ENCODE measurements at regions of chr7 and their contacts with region 1.

Region 1: DNA sequence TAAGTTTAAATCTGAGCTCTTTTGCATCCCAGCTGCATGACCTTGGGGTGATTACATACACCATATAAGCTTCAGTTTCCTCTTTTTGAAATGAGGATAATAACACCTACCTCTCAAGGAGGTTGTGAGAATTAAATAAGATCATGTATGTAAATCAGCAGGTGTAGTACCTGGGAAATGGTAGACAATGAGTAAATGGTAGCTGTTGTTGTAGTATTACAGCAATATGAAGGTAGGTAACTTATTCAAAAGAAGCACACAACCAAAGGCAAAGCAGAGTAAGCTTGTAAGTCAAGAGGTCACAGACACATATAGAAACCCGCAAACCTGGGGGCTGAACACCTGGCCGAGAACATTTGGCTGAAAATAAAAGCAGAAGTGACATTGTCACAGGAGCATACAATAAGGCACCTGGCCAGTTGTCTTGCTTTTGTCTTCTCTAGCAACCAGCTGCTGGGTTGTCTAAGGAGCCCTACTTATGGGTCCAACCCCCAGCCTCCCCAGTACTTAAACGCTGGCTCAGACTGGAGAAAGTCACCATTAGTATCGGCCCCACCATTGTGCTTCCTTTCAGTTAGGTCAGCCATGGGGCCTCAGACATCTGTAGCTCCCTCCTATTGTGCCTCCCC is 203.6 kb upstream of the MKLN1 start:
- DNase-seq: peak; percentile 96
- H3K4me3 ChIP-seq: peak overlapping the region; percentile 38
- H3K27ac ChIP-seq: peak overlapping the region; percentile 100
- H3K4me1 ChIP-seq: peaks cover 51% of the 10 kb centered on the region
- CTCF ChIP-seq: no peak

Region 2: DNA sequence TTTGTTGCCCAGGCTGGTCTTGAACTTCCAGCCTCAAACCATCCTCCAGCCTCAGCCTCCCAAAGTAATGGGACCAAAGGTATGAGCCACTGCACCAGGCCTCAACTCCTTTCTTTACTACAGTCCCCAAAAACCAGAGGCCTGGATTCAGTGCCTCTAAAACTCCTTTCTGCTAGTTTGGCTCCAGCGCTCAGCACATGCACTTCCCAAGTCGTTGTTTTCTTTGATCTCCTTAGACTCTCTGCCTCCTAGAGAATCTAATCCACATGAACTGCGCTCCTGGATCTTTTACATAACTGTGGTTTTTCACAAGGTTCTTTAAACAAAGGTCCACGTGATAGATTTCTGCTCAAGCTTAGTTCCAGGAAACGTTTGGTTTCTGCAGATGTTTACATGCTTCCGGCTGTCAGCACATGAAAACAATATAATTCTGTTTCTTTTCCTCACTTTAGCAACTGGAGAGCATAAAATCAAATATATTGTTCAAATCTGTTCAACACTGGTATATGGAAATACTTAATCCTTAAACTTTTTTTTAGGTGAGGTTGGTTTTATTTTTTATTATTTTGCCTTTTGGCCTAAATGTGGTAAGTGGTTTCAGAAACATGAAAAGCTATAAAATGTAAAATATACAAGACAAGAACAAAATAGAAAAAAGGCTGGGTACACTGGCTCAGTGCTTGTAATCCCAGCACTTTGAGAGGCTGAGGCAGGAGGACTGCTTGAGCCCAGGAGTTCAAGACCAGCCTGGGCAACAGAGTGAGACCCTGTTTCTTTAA is 66.9 kb before region 1 on chr7:
- CTCF ChIA-PET with region 1: no interaction called
- POLR2A ChIA-PET with region 1: interaction called, 15 read pairs
- intact Hi-C with region 1: no loop called
- DNase-seq: peak; percentile 73
- H3K4me3 ChIP-seq: peak overlapping the region; percentile 25
- H3K27ac ChIP-seq: peak overlapping the region; percentile 85
- H3K4me1 ChIP-seq: peaks cover 31% of the 10 kb centered on the region
- CTCF ChIP-seq: no peak

Region 3: GRCh38 chr7:131068604-131069021 is 55.5 kb before region 1 on chr7:
- CTCF ChIA-PET with region 1: no interaction called
- POLR2A ChIA-PET with region 1: interaction called, 13 read pairs
- intact Hi-C with region 1: no loop called
- DNase-seq: no peak
- H3K4me3 ChIP-seq: no peak overlapping the region
- H3K27ac ChIP-seq: no peak overlapping the region
- H3K4me1 ChIP-seq: peaks cover 40% of the 10 kb centered on the region
- CTCF ChIP-seq: peak; percentile 45; the same call in 1 of the 2 replicates

Region 4: DNA sequence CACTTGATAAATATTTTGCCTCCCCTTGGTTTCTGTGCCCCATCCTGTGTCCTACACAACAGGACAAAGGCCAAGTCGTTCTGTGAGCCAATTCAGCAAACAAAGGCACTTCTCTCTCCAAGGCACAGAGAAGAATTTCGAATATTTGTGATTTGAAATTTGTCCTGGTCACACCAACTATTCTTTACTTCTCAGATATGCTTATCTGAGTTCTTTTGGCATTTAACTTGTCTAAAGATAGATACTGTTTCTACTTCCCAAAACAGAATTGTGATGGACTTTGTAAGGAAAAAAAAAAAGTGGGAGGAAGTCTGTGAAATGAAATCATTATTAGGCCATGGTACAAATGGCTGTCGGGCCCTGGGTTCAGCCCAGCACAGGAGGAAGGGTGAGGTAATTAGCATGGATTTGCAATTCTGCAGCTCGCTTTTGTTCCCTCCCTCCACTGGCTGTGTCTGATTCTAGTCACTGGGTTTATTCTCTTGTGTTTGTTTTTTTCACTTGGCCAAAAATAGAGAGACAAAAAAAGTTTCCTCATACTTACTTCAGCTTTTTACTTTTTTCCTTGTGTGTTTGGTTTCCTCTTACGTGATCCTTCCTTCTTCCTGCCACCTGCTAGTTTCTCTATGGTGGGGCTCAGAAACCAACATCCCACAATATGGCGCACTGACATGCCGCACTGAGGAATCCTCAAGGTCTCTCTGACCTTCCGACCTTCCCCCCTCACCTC is 95.4 kb after region 1 on chr7:
- CTCF ChIA-PET with region 1: no interaction called
- POLR2A ChIA-PET with region 1: interaction called, 14 read pairs
- intact Hi-C with region 1: loop called (anchors 1 kb)
- DNase-seq: peak; percentile 61
- H3K4me3 ChIP-seq: peak overlapping the region; percentile 28
- H3K27ac ChIP-seq: peak overlapping the region; percentile 79
- H3K4me1 ChIP-seq: peaks cover 30% of the 10 kb centered on the region
- CTCF ChIP-seq: no peak

Region 5: DNA sequence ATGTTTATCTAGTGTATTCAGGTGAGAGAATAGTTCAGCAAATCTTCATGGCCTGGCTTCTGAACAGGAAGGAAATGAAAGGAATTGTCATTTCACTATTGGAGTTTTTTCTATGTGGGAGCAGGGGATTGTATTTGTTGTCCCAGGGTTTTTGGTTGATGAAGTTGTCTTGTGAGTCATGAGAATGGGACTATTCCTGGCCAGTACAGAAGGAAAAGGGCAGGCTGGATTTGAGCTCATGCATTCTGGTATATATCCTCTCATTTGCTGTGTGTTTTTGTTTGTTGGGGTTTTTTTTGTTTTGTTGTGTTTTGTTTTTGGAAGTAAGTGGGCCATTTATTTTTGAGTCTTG is 102.4 kb after region 1 on chr7:
- CTCF ChIA-PET with region 1: no interaction called
- POLR2A ChIA-PET with region 1: interaction called, 16 read pairs
- intact Hi-C with region 1: loop called (anchors 1 kb)
- DNase-seq: no peak
- H3K4me3 ChIP-seq: no peak overlapping the region
- H3K27ac ChIP-seq: no peak overlapping the region
- H3K4me1 ChIP-seq: peaks cover 26% of the 10 kb centered on the region
- CTCF ChIP-seq: no peak

Region 6: GRCh38 chr7:131231381-131232220 is 107.5 kb after region 1 on chr7:
- CTCF ChIA-PET with region 1: no interaction called
- POLR2A ChIA-PET with region 1: interaction called, 16 read pairs
- intact Hi-C with region 1: loop called (anchors 1 kb)
- DNase-seq: peak; percentile 72
- H3K4me3 ChIP-seq: peak overlapping the region; percentile 37
- H3K27ac ChIP-seq: peak overlapping the region; percentile 73
- H3K4me1 ChIP-seq: peaks cover 28% of the 10 kb centered on the region
- CTCF ChIP-seq: no peak

Region 7: DNA sequence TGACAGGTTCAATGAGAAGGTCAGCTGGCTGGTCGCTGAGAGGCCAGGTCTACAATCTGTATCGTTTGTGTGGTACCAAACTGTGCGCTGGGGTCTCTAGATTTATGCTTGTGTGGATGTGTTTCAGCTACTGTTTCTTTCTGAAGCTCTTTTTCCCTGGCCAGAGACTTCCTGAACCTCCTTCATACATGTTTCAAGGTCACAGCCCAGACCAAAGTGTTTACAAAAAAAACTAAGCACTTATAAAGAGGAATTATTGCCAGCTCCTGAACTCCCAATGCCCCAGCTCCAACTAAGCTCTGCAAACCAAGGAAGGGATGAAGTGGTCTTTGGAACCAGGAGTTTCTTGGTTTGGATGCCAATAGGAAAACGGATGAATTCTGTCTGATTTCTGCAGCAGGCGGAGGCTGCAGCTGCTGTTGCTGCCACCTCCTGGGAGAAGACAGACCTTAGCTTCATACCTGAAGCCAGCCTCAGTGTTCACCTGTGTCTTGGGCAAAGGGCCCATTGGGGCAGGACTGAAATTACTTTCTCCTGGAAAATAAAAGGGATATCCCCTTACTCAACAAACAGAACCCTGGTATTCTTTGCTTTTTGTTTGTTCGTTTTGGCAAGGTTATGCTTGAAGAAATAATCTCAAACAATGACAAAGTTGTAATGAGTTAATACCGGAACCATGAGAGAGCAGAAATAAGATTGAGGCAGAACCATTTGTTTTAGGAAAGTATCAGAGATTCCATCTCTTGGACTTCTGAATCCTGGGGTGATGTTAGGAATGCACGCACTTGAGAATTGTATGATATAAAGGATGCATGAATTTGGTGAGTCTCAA is 179.0 kb after region 1 on chr7:
- CTCF ChIA-PET with region 1: interaction called, 5 read pairs
- POLR2A ChIA-PET with region 1: interaction called, 6 read pairs
- intact Hi-C with region 1: loop called (anchors 1 kb)
- DNase-seq: peak; percentile 37
- H3K4me3 ChIP-seq: no peak overlapping the region
- H3K27ac ChIP-seq: no peak overlapping the region
- H3K4me1 ChIP-seq: peaks cover 6% of the 10 kb centered on the region
- CTCF ChIP-seq: peak; percentile 74

Region 8: DNA sequence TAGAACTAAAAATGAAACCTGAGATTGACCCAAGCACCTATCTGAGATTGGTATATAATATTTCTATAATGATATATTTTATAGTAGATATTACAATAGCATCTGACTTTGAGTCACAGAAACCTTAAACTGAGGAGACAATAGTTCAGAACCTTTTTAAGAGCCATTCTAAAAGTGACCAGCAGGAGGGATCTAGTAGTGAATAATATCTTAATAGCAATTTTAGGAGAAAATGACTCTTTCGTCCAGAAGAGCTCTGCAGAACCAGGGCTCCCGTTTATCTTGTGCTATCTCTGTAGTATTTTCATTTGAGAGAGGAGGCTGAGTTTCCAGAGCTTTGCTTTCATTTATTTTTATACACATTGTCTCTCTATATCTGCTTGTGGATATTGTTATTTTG is 364.2 kb after region 1 on chr7:
- CTCF ChIA-PET with region 1: no interaction called
- POLR2A ChIA-PET with region 1: no interaction called
- intact Hi-C with region 1: no loop called
- DNase-seq: no peak
- H3K4me3 ChIP-seq: no peak overlapping the region
- H3K27ac ChIP-seq: no peak overlapping the region
- H3K4me1 ChIP-seq: no peaks in the 10 kb centered on the region
- CTCF ChIP-seq: peak; percentile 39; the same call in 1 of the 2 replicates